CD8-positive, alpha-beta memory T cell (primary cell): ENCODE measurements at regions of chr3 and their contacts with region 1.

Region 1: DNA sequence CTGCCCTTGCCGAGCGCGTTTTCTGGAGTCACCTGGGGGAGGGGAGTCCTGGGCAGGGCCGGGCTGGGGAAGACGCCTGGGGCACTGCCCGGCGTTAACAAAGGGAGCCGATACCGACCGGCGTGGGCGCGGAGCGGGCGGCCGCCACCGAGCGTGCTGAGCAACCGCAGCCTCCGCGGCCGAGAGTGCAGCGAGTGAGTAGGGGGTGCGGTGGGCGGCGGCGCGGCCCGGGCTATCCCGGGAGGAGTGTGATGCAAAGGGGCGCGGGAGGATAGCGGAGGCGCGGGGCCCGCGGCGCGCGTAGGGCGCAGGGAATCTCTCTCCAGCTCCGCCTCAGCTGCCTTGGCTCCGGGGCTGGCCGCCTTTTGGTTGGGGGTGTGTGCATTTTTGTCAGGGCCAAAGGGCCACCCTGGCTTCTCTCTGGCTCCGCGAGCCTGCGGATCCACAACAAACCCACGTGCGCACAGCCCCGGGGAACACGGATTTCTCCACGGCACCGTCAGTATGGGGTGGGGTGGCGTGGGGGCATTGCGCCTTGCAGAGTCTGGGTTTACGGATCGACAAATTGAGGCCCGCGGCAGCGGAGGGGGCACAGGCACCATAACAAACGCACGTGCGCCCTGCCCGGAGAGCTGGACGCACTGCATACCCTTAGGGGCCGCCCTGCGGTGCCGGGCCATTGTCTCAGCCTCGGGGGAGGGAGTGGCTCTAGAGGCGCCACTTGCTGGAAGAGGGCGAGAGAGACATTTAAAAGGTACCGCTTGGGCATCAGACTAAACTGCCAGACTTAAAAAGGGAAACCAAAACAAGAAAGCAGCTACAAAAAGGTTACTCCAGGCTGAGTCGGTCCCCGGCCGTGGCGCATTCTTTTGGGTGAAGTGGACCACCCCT is 560 bp downstream of the ST6GAL1 start:
- DNase-seq: peak; percentile 47 to 80 (median 76)
- H3K4me3 ChIP-seq: peak overlapping the region; percentile 96
- H3K4me3 Mint-ChIP-seq: peak overlapping the region; percentile 93 to 100 (median 99)
- H3K27ac ChIP-seq: peak overlapping the region; percentile 85
- H3K27ac Mint-ChIP-seq: peak overlapping the region; percentile 87 to 99 (median 98)
- H3K4me1 ChIP-seq: peaks cover 28% of the 10 kb centered on the region
- H3K4me1 Mint-ChIP-seq: peaks cover 42 to 47% (median 46%) of the 10 kb centered on the region in 3 donors
- H3K27me3 ChIP-seq: no peaks in the 10 kb centered on the region
- H3K27me3 Mint-ChIP-seq: peaks cover 0 to 4% of the 10 kb centered on the region in 2 donors

Region 2: DNA sequence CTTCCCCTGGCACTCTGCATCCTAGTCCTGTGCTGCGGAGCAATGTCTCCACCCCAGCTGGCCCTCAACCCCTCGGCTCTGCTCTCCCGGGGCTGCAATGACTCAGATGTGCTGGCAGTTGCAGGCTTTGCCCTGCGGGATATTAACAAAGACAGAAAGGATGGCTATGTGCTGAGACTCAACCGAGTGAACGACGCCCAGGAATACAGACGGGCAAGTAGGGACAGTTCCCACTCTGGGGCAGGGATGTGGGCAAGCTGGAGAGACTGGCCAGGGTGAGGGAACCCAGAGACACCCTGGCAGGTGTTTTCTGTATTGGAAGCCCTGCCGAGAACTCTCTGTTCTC is 290.4 kb before region 1 on chr3:
- CTCF ChIA-PET with region 1: no interaction called
- POLR2A ChIA-PET with region 1: no interaction called
- DNase-seq: no peak
- H3K4me3 ChIP-seq: no peak overlapping the region
- H3K4me3 Mint-ChIP-seq: no peak overlapping the region
- H3K27ac ChIP-seq: no peak overlapping the region
- H3K27ac Mint-ChIP-seq: no peak overlapping the region
- H3K4me1 ChIP-seq: no peaks in the 10 kb centered on the region
- H3K4me1 Mint-ChIP-seq: no peaks in the 10 kb centered on the region
- H3K27me3 ChIP-seq: no peaks in the 10 kb centered on the region
- H3K27me3 Mint-ChIP-seq: peaks cover 3 to 55% of the 10 kb centered on the region in 2 donors

Region 3: GRCh38 chr3:186826976-186827731 is 103.7 kb before region 1 on chr3:
- CTCF ChIA-PET with region 1: interaction called, 5 read pairs
- POLR2A ChIA-PET with region 1: interaction called, 13 read pairs
- DNase-seq: peak; percentile 82 to 92 (median 85)
- H3K4me3 ChIP-seq: peak overlapping the region; percentile 68
- H3K4me3 Mint-ChIP-seq: peak overlapping the region; percentile 62 to 89 (median 71)
- H3K27ac ChIP-seq: no peak overlapping the region
- H3K27ac Mint-ChIP-seq: peak overlapping the region in 1 of 8 donors; percentile 73
- H3K4me1 ChIP-seq: peaks cover 23% of the 10 kb centered on the region
- H3K4me1 Mint-ChIP-seq: peaks cover 8 to 25% (median 11%) of the 10 kb centered on the region in 3 donors
- H3K27me3 ChIP-seq: peaks cover 28% of the 10 kb centered on the region
- H3K27me3 Mint-ChIP-seq: peaks cover 28 to 49% of the 10 kb centered on the region in 2 donors

Region 4: GRCh38 chr3:186909078-186909853 is 21.6 kb before region 1 on chr3:
- CTCF ChIA-PET with region 1: interaction called, 35 read pairs
- POLR2A ChIA-PET with region 1: interaction called, 42 read pairs
- DNase-seq: peak; percentile 58 to 89 (median 82)
- H3K4me3 ChIP-seq: peak overlapping the region; percentile 40
- H3K4me3 Mint-ChIP-seq: peak overlapping the region; percentile 78 to 86 (median 80)
- H3K27ac ChIP-seq: peak overlapping the region; percentile 73
- H3K27ac Mint-ChIP-seq: peak overlapping the region; percentile 88 to 98 (median 92)
- H3K4me1 ChIP-seq: peaks cover 22% of the 10 kb centered on the region
- H3K4me1 Mint-ChIP-seq: peaks cover 41 to 56% (median 51%) of the 10 kb centered on the region in 3 donors
- H3K27me3 ChIP-seq: no peaks in the 10 kb centered on the region
- H3K27me3 Mint-ChIP-seq: no peaks in the 10 kb centered on the region

Region 5: DNA sequence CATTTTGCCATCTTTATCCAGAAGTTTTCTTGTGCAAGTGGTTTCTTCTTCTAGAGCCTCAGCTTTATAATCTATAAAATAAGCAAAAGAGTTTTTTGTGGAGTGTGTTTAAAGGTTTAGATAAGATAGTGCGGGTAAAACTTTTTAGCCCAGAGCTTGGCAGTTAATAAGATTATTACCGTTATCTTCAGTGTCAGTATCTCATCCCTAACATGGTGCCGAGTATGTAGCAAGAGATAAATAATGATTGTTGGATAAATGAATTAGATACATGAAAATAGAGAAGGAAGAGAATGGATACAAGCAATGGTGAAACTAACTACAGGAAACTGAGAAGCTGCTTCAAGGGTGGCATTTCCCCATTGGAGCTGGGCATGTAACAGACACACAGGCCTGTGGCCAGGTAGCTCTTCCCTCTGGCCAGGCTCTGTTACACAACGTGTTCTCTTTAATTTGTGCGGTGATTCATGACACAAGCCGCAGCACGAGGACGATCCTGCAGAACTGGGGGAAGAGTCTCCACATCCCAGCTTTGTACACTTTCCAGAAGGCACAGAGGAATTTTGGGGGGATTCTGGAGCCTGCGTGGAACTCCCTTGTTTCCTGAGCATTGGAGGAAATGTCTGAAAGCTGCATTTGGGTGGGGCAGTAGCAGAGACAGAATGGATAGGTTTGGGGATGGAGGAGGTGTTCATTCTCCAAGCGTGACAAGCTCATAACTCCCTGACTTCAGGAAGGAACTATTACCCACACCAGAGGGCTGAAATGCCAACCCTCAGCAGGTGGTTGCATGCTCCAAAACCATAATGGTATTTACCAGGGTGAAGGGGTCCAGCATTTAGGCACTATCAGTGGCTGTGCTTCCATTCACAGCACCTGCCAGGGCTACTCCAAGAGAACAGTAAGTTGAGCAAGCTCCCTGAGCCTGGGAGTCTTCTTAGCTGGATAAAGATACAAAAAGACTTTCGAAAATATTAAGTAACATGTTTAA is 14.8 kb before region 1 on chr3:
- CTCF ChIA-PET with region 1: interaction called, 14 read pairs
- POLR2A ChIA-PET with region 1: interaction called, 4 read pairs
- DNase-seq: peak in 1 of 5 donors; percentile 30
- H3K4me3 ChIP-seq: peak overlapping the region; percentile 25
- H3K4me3 Mint-ChIP-seq: peak overlapping the region in 6 of 7 donors; percentile 29 to 84 (median 58)
- H3K27ac ChIP-seq: no peak overlapping the region
- H3K27ac Mint-ChIP-seq: peak overlapping the region in 7 of 8 donors; percentile 5 to 91 (median 73)
- H3K4me1 ChIP-seq: peaks cover 24% of the 10 kb centered on the region
- H3K4me1 Mint-ChIP-seq: peaks cover 40 to 50% (median 48%) of the 10 kb centered on the region in 3 donors
- H3K27me3 ChIP-seq: no peaks in the 10 kb centered on the region
- H3K27me3 Mint-ChIP-seq: no peaks in the 10 kb centered on the region

Region 6: GRCh38 chr3:187112934-187113793 is 182.3 kb after region 1 on chr3:
- CTCF ChIA-PET with region 1: interaction called, 11 read pairs
- POLR2A ChIA-PET with region 1: interaction called, 3 read pairs
- DNase-seq: peak in 2 of 5 donors; percentile 24 to 47
- H3K4me3 ChIP-seq: no peak overlapping the region
- H3K4me3 Mint-ChIP-seq: no peak overlapping the region
- H3K27ac ChIP-seq: no peak overlapping the region
- H3K27ac Mint-ChIP-seq: no peak overlapping the region
- H3K4me1 ChIP-seq: no peaks in the 10 kb centered on the region
- H3K4me1 Mint-ChIP-seq: peaks cover 3 to 8% (median 7%) of the 10 kb centered on the region in 3 donors
- H3K27me3 ChIP-seq: no peaks in the 10 kb centered on the region
- H3K27me3 Mint-ChIP-seq: peaks cover 0 to 4% of the 10 kb centered on the region in 2 donors

Region 7: GRCh38 chr3:187130346-187131066 is 199.6 kb after region 1 on chr3:
- CTCF ChIA-PET with region 1: no interaction called
- POLR2A ChIA-PET with region 1: no interaction called
- DNase-seq: peak in 4 of 5 donors; percentile 20 to 81 (median 67)
- H3K4me3 ChIP-seq: peak overlapping the region; percentile 44
- H3K4me3 Mint-ChIP-seq: peak overlapping the region; percentile 2 to 80 (median 74)
- H3K27ac ChIP-seq: peak overlapping the region; percentile 68
- H3K27ac Mint-ChIP-seq: peak overlapping the region; percentile 93 to 99 (median 98)
- H3K4me1 ChIP-seq: peaks cover 24% of the 10 kb centered on the region
- H3K4me1 Mint-ChIP-seq: peaks cover 25 to 51% (median 28%) of the 10 kb centered on the region in 3 donors
- H3K27me3 ChIP-seq: no peaks in the 10 kb centered on the region
- H3K27me3 Mint-ChIP-seq: no peaks in the 10 kb centered on the region